ENCODE measurements at regions of chr12 and their contacts with region 1.

Region 1: GRCh38 chr12:5088586-5089264 is 45.0 kb downstream of the KCNA5 start:
- DNase-seq: peak; percentile 12 to 37 (median 23)
- H3K4me3 ChIP-seq: no peak overlapping the region
- H3K27ac ChIP-seq: no peak overlapping the region
- H3K4me1 ChIP-seq: peaks cover 2% of the 10 kb centered on the region
- H3K27me3 ChIP-seq: no peaks in the 10 kb centered on the region
- CTCF ChIP-seq: no peak
- EP300 ChIP-seq: no peak
- POLR2A ChIP-seq: no peak

Region 2: GRCh38 chr12:5017638-5018348 is 70.9 kb before region 1 on chr12:
- intact Hi-C with region 1: loop called in 1 of 4 experiments (anchors 5 kb)
- DNase-seq: no peak
- H3K4me3 ChIP-seq: no peak overlapping the region
- H3K27ac ChIP-seq: no peak overlapping the region
- H3K4me1 ChIP-seq: no peaks in the 10 kb centered on the region
- H3K27me3 ChIP-seq: no peaks in the 10 kb centered on the region
- CTCF ChIP-seq: no peak
- EP300 ChIP-seq: no peak
- POLR2A ChIP-seq: no peak

Region 3: GRCh38 chr12:5138845-5139244 is 50.1 kb after region 1 on chr12:
- intact Hi-C with region 1: no loop called
- DNase-seq: no peak
- H3K4me3 ChIP-seq: no peak overlapping the region
- H3K27ac ChIP-seq: no peak overlapping the region
- H3K4me1 ChIP-seq: no peaks in the 10 kb centered on the region
- H3K27me3 ChIP-seq: no peaks in the 10 kb centered on the region
- CTCF ChIP-seq: no peak
- EP300 ChIP-seq: no peak
- POLR2A ChIP-seq: no peak